Calu3 (cell line): ENCODE measurements at regions of chr14 and their contacts with region 1.

Region 1: DNA sequence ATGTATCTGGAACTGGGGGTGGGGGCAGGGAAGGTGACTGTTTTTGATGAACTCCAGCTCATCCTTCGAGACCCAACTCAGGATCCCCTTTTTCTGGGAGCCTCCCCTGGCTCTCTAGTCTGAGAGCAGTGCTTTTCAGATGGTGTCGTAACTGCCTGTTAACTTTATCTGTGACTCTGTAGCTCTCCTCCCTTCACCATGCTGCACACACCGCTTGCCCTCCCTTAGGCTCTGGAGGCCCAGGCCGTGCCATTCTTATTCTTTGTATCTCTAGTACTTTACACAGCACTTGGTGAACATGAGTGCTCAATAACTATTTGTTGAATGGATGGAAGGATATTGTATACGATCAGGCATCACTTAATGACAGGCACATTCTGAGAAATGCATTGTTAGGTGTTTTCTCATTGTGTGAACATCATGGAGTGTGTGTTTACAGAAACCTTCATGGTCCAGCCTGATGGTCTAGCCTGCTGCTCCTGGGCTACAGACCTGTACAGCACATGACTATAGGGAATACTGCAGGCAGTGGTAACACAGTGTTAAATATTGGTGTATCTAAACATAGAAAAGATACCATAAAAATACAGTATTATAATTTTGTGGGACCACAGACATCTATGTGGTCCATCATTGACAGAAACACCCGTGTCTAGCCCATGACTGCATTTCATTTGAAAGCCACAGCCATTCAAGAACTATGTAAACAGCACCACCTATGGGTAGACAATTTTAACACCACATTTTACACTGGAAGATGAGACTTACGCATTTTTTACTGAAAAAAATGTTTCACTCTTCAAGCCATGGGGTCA is 91.8 kb downstream of the EML1 start:
- DNase-seq: peak; percentile 30
- H3K4me3 Mint-ChIP-seq: no peak overlapping the region
- H3K27ac Mint-ChIP-seq: no peak overlapping the region
- H3K4me1 Mint-ChIP-seq: no peaks in the 10 kb centered on the region
- H3K27me3 Mint-ChIP-seq: peaks cover 33% of the 10 kb centered on the region
- CTCF ChIP-seq: peak; percentile 67

Region 2: GRCh38 chr14:99137991-99138491 is 747.0 kb before region 1 on chr14:
- CTCF ChIA-PET with region 1: no interaction called
- intact Hi-C with region 1: no loop called
- DNase-seq: no peak
- H3K4me3 Mint-ChIP-seq: no peak overlapping the region
- H3K27ac Mint-ChIP-seq: no peak overlapping the region
- H3K4me1 Mint-ChIP-seq: no peaks in the 10 kb centered on the region
- H3K27me3 Mint-ChIP-seq: peaks cover 49% of the 10 kb centered on the region
- CTCF ChIP-seq: no peak

Region 3: GRCh38 chr14:99518441-99519346 is 366.3 kb before region 1 on chr14:
- CTCF ChIA-PET with region 1: interaction called, 3 read pairs
- intact Hi-C with region 1: loop called (anchors 5 kb)
- DNase-seq: peak; percentile 89
- H3K4me3 Mint-ChIP-seq: no peak overlapping the region
- H3K27ac Mint-ChIP-seq: no peak overlapping the region
- H3K4me1 Mint-ChIP-seq: no peaks in the 10 kb centered on the region
- H3K27me3 Mint-ChIP-seq: no peaks in the 10 kb centered on the region
- CTCF ChIP-seq: peak; percentile 93

Region 4: GRCh38 chr14:99683619-99684355 is 201.3 kb before region 1 on chr14 and contains the start of gene CYP46A1:
- CTCF ChIA-PET with region 1: no interaction called
- intact Hi-C with region 1: loop called (anchors 1 kb)
- DNase-seq: peak; percentile 99
- H3K4me3 Mint-ChIP-seq: peak within 1 kb of the TSS; percentile 76
- H3K27ac Mint-ChIP-seq: peak within 1 kb of the TSS; percentile 56
- H3K4me1 Mint-ChIP-seq: peaks cover 6% of the 10 kb centered on the region
- H3K27me3 Mint-ChIP-seq: peaks cover 41% of the 10 kb centered on the region
- CTCF ChIP-seq: no peak
- total RNA-seq, gene CYP46A1: not detected in 2 replicates

Region 5: GRCh38 chr14:99729991-99730868 is 154.8 kb before region 1 on chr14:
- CTCF ChIA-PET with region 1: no interaction called
- intact Hi-C with region 1: loop called (anchors 2 kb)
- DNase-seq: peak; percentile 89
- H3K4me3 Mint-ChIP-seq: peak overlapping the region; percentile 50
- H3K27ac Mint-ChIP-seq: no peak overlapping the region
- H3K4me1 Mint-ChIP-seq: peaks cover 12% of the 10 kb centered on the region
- H3K27me3 Mint-ChIP-seq: peaks cover 44% of the 10 kb centered on the region
- CTCF ChIP-seq: peak; percentile 76